ENCODE measurements at regions of chr9 and their contacts with region 1.

Region 1: GRCh38 chr9:114082017-114082762 is 4.1 kb upstream of the AMBP start:
- DNase-seq: peak; percentile 87

Region 2: GRCh38 chr9:114096041-114096511 is 13.9 kb after region 1 on chr9:
- CTCF ChIA-PET with region 1: interaction called, 13 read pairs
- POLR2A ChIA-PET with region 1: no interaction called
- DNase-seq: peak; percentile 35

Region 3: DNA sequence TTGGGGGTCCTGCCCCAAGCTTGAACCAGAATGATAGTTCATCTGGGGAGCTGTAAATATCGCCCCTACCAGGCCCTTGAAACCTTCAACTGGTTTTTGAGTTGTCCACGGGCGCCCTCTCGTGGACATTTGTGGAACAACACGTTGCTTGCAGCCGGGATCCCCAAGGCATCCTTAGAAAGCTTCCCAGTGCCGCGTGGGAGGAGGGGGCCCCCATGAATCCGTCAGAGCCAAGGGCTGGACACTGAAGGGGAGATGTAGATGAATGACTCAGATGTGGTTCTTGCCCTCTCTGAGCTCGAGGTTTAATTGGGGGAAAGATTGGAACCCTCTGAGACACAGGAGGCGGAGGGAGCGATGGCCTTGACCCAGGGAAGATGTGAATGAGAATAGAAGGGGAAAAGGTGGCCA is 208.9 kb after region 1 on chr9:
- CTCF ChIA-PET with region 1: interaction called, 20 read pairs
- POLR2A ChIA-PET with region 1: no interaction called
- DNase-seq: peak; percentile 73